Right cardiac atrium (tissue), 5 donors: ENCODE measurements at regions of chr1 and their contacts with region 1.

Region 1: GRCh38 chr1:18100491-18101063 is 7.0 kb upstream of the IGSF21 start:
- DNase-seq: peak; percentile 60 to 79 (median 76)
- ATAC-seq: peak; percentile 59 to 79
- H3K4me3 ChIP-seq: no peak overlapping the region
- H3K27ac ChIP-seq: no peak overlapping the region
- H3K4me1 ChIP-seq: no peaks in the 10 kb centered on the region
- H3K27me3 ChIP-seq: no peaks in the 10 kb centered on the region

Region 2: GRCh38 chr1:17653728-17654351 is 446.7 kb before region 1 on chr1:
- intact Hi-C with region 1: loop called in 2 of 4 experiments (anchors 10 kb)
- DNase-seq: peak; percentile 39 to 76 (median 73)
- ATAC-seq: peak; percentile 27 to 38
- H3K4me3 ChIP-seq: no peak overlapping the region
- H3K27ac ChIP-seq: no peak overlapping the region
- H3K4me1 ChIP-seq: peaks cover 2% of the 10 kb centered on the region
- H3K27me3 ChIP-seq: no peaks in the 10 kb centered on the region